Activated CD4-positive, alpha-beta memory T cell treated with anti-CD3 and anti-CD28 coated beads for 36 hours (primary cell): ENCODE measurements at regions of chr6 and their contacts with region 1.

Region 1: DNA sequence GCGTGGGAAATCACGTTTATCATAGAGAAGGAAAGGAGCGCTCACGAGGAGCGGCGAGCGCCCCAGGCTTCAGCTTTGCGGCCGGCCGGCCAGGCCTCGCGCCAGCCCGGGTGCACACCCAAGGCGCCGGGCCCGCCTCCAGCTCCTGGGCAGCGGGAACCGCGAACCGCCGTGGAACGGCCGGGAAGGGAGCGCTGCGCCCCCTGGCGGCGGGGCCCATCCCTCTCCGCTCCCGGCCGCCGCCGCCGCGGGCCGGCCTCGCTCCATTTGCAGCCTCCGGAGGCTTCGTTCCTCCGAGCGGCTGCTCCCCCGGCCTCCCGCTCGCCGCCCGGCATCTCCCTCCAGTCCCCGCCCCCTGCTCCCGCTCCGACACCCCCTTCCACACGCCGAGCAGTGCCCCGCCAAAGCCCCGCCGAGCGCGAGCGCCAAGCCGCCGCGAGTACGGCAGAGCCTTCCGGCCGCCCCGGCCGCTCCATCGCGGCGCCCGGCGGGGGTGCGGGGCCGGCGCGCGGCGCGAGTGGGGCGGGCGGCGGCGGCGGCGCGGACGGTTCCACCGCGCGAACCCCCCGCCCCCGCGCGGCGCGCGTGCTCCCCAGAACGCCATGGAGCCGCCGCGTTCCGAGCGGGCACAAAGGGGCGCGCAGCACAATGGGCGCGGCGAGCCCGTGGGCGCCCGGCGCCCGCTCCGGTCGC is 956 bp downstream of the BEND3 start:
- DNase-seq: peak; percentile 77
- H3K4me3 Mint-ChIP-seq: peak overlapping the region; percentile 72
- H3K27ac Mint-ChIP-seq: peak overlapping the region; percentile 45
- H3K4me1 Mint-ChIP-seq: peaks cover 18% of the 10 kb centered on the region
- H3K27me3 Mint-ChIP-seq: peaks cover 7% of the 10 kb centered on the region

Region 2: DNA sequence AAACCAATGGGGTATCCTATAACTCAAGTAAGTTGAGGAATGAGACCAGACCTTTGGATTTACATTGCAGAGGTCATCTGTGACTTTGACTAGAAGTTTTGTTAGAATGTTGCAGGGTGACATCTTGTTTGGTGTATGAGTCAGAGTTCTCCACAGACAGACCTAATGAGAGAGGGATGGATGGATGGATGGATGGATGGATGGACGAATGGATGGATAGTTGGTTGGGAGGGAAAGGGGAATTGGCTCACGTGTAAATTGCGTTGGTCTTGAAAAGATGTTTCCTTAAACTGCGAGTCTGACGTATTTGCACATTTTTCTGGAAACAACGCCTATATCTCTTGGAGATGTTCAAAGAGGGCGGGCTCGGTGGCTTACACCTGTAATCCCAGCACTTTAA is 87.4 kb before region 1 on chr6:
- CTCF ChIA-PET with region 1: interaction called, 29 read pairs
- POLR2A ChIA-PET with region 1: interaction called, 3 read pairs
- intact Hi-C with region 1: loop called (anchors 1 kb)
- DNase-seq: no peak
- H3K4me3 Mint-ChIP-seq: no peak overlapping the region
- H3K27ac Mint-ChIP-seq: no peak overlapping the region
- H3K4me1 Mint-ChIP-seq: peaks cover 22% of the 10 kb centered on the region
- H3K27me3 Mint-ChIP-seq: no peaks in the 10 kb centered on the region

Region 3: DNA sequence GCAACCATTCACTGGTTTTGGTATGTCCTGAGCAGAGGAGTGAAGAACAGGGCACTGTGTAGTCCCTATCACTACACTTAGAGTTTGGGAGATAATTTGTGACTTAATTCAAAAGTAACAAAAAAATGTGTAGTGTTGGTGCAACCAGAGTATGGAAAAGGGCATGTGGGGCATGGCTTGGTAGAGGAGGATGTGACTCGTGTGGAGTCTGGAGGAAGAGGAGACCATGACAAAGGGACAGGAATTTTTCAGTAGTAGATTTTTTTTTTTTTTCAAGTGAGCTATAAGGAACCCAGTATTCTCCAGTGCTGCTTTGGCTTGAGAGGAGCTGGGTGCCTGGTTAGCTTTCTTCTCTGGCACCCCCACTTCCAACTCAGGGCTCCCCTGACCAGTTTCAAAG is 81.2 kb before region 1 on chr6:
- CTCF ChIA-PET with region 1: interaction called, 29 read pairs
- POLR2A ChIA-PET with region 1: interaction called, 3 read pairs
- intact Hi-C with region 1: loop called (anchors 1 kb)
- DNase-seq: no peak
- H3K4me3 Mint-ChIP-seq: no peak overlapping the region
- H3K27ac Mint-ChIP-seq: peak overlapping the region; percentile 20
- H3K4me1 Mint-ChIP-seq: peaks cover 34% of the 10 kb centered on the region
- H3K27me3 Mint-ChIP-seq: no peaks in the 10 kb centered on the region

Region 4: GRCh38 chr6:107064579-107065065 is 49.7 kb before region 1 on chr6:
- CTCF ChIA-PET with region 1: interaction called, 10 read pairs
- POLR2A ChIA-PET with region 1: interaction called, 4 read pairs
- intact Hi-C with region 1: loop called (anchors 5 kb)
- DNase-seq: peak; percentile 65
- H3K4me3 Mint-ChIP-seq: no peak overlapping the region
- H3K27ac Mint-ChIP-seq: peak overlapping the region; percentile 38
- H3K4me1 Mint-ChIP-seq: peaks cover 46% of the 10 kb centered on the region
- H3K27me3 Mint-ChIP-seq: no peaks in the 10 kb centered on the region

Region 5: DNA sequence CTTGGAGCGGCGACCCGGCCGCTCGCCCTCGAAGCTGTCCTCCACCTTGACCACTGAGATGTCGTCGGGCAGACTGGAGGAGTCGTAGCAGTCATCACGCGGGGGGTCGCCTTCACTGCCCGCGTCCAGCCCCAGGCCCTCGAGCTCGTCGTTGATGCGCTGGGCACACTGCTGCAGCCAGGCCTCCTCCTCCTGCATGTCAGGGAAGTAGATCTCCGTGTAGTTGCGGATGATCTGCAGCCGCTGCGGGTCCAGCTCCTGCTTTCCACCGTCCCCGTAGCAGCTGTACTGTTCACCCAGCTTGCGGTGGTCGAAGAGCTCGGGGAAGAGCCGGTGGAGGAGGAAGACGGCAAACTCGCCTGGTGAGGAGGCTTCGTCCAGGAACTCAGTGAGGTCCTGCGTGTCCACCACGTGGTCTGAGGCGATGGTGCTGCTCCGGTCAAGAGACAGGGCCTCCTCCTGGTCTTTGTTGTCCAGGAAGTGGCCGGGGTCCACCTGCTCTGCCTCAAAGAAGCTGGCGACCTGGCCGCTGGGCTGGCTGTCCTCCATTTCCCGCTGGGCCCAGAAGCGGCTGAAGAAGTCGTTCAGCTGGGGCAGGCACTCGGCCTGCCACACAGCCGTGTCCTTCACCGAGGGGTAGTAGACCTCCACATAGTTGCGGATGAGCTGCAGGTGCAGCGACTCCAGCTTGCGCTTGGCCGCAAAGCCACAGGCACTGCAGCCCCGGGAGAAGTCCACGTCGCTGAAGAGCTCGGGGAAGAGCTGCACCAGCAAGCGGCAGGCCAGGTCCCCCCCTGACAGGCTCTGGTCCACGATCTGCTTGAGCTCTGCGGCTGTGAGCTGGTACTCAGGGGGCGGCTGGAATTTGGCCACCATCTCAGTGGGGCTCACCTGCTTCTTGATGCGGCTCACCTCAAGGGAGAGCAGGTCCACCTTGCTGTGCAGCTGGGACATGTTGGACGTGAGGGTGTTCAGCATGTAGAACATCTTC is 44.5 kb before region 1 on chr6:
- CTCF ChIA-PET with region 1: interaction called, 10 read pairs
- POLR2A ChIA-PET with region 1: no interaction called
- intact Hi-C with region 1: no loop called
- DNase-seq: no peak
- H3K4me3 Mint-ChIP-seq: no peak overlapping the region
- H3K27ac Mint-ChIP-seq: no peak overlapping the region
- H3K4me1 Mint-ChIP-seq: peaks cover 25% of the 10 kb centered on the region
- H3K27me3 Mint-ChIP-seq: no peaks in the 10 kb centered on the region

Region 6: GRCh38 chr6:107132330-107132954 is 18.1 kb after region 1 on chr6:
- CTCF ChIA-PET with region 1: no interaction called
- POLR2A ChIA-PET with region 1: no interaction called
- intact Hi-C with region 1: no loop called
- DNase-seq: peak; percentile 19
- H3K4me3 Mint-ChIP-seq: no peak overlapping the region
- H3K27ac Mint-ChIP-seq: no peak overlapping the region
- H3K4me1 Mint-ChIP-seq: no peaks in the 10 kb centered on the region
- H3K27me3 Mint-ChIP-seq: no peaks in the 10 kb centered on the region